ENCODE measurements at regions of chr19 and their contacts with region 1.

Region 1: GRCh38 chr19:16041299-16041990 is 34.9 kb upstream of the TPM4 start:
- DNase-seq: peak; percentile 75
- H3K4me3 Mint-ChIP-seq: no peak overlapping the region
- H3K27ac Mint-ChIP-seq: no peak overlapping the region
- H3K4me1 Mint-ChIP-seq: no peaks in the 10 kb centered on the region
- H3K27me3 Mint-ChIP-seq: no peaks in the 10 kb centered on the region
- CTCF ChIP-seq: peak; percentile 99

Region 2: GRCh38 chr19:15629003-15629880 is 412.2 kb before region 1 on chr19:
- CTCF ChIA-PET with region 1: interaction called, 8 read pairs
- POLR2A ChIA-PET with region 1: no interaction called
- intact Hi-C with region 1: loop called (anchors 2 kb)
- DNase-seq: peak; percentile 69
- H3K4me3 Mint-ChIP-seq: no peak overlapping the region
- H3K27ac Mint-ChIP-seq: no peak overlapping the region
- H3K4me1 Mint-ChIP-seq: no peaks in the 10 kb centered on the region
- H3K27me3 Mint-ChIP-seq: no peaks in the 10 kb centered on the region
- CTCF ChIP-seq: peak; percentile 95

Region 3: GRCh38 chr19:16062789-16063188 is 21.3 kb after region 1 on chr19:
- CTCF ChIA-PET with region 1: interaction called, 20 read pairs
- POLR2A ChIA-PET with region 1: interaction called, 5 read pairs
- intact Hi-C with region 1: no loop called
- DNase-seq: peak; percentile 57
- H3K4me3 Mint-ChIP-seq: no peak overlapping the region
- H3K27ac Mint-ChIP-seq: peak overlapping the region; percentile 57
- H3K4me1 Mint-ChIP-seq: peaks cover 12% of the 10 kb centered on the region
- H3K27me3 Mint-ChIP-seq: no peaks in the 10 kb centered on the region
- CTCF ChIP-seq: peak; percentile 87

Region 4: GRCh38 chr19:16070366-16070990 is 29.0 kb after region 1 on chr19:
- CTCF ChIA-PET with region 1: interaction called, 23 read pairs
- POLR2A ChIA-PET with region 1: interaction called, 7 read pairs
- intact Hi-C with region 1: no loop called
- DNase-seq: peak; percentile 85
- H3K4me3 Mint-ChIP-seq: no peak overlapping the region
- H3K27ac Mint-ChIP-seq: no peak overlapping the region
- H3K4me1 Mint-ChIP-seq: peaks cover 6% of the 10 kb centered on the region
- H3K27me3 Mint-ChIP-seq: no peaks in the 10 kb centered on the region
- CTCF ChIP-seq: no peak

Region 5: GRCh38 chr19:16076154-16076957 is 34.9 kb after region 1 on chr19 and contains the start of gene TPM4:
- CTCF ChIA-PET with region 1: interaction called, 23 read pairs
- POLR2A ChIA-PET with region 1: interaction called, 14 read pairs
- intact Hi-C with region 1: loop called (anchors 1 kb)
- DNase-seq: peak; percentile 94
- H3K4me3 Mint-ChIP-seq: peak within 1 kb of the TSS; percentile 71
- H3K27ac Mint-ChIP-seq: peak within 1 kb of the TSS; percentile 99
- H3K4me1 Mint-ChIP-seq: peaks cover 19% of the 10 kb centered on the region
- H3K27me3 Mint-ChIP-seq: no peaks in the 10 kb centered on the region
- CTCF ChIP-seq: no peak
- total RNA-seq, gene TPM4: 355 and 424 TPM in 2 replicates

Region 6: DNA sequence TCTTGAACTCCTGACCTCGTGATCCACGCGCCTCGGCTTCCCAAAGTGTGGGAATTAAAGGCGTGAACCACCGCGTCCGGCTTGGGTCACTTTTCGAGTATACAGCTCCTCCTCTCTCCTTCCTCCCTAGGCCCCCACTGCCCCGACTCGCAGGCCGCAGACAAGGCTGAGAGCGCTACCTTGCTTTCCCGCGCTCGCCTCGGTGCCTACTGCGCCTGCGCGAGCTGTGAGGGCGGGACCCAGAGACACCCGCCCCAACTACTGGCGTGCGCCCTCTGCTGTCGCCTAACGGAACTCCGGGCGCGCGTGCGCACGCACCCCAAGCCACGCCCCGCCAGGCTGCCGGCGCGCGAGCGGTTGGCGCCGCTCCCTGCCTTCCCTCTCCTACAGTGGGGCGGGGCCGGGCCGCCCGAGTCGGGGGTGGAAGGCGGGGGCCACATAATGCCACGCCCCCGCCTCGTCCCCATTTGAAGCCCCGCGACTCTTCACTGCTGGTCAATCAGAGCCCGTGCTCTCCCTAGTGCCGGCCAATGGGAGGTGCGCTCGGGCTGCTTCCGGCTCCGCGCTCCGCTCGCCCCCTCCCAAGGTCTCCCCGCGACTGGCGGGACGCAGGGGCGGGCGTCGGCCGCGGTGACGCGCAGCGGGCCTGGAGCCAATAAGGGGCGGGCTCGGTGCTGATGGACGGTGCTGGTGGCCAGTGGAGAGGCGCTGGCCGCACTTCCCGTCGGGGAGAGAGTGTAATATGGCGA is 69.9 kb after region 1 on chr19 and contains the start of gene RAB8A:
- CTCF ChIA-PET with region 1: interaction called, 34 read pairs
- POLR2A ChIA-PET with region 1: interaction called, 8 read pairs
- intact Hi-C with region 1: loop called (anchors 1 kb)
- DNase-seq: peak; percentile 99
- H3K4me3 Mint-ChIP-seq: peak within 1 kb of the TSS; percentile 90
- H3K27ac Mint-ChIP-seq: peak within 1 kb of the TSS; percentile 94
- H3K4me1 Mint-ChIP-seq: no peaks in the 10 kb centered on the region
- H3K27me3 Mint-ChIP-seq: no peaks in the 10 kb centered on the region
- CTCF ChIP-seq: peak; percentile 91
- total RNA-seq, gene RAB8A: 41.6 and 50.1 TPM in 2 replicates

Region 7: DNA sequence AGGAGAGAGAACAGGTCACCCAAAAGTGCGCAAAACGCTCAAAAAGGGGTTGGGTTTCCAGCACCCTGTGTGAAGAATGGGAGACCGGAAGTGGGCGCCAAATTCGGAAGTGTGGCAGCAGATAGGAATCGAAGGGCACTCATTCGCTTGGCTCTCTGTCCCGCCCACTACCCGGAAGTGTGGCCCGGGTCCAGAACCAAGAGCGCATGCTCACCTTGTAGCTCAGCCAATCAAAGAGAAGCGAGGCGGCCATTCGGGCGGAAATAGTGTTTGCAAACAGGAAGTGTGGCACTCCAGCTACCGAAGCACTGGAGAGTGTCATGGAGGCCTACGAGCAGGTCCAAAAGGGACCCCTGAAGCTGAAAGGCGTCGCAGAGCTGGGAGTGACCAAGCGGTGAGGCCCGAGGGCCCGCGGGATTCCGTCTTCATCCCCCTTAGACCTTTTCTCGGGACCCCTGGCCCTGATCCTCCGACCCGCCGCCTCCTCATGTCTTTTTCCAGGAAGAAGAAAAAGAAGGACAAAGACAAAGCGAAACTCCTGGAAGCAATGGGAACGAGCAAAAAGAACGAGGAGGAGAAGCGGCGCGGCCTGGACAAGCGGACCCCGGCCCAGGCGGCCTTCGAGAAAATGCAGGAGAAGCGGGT is 143.8 kb after region 1 on chr19 and contains the start of gene FAM32A:
- CTCF ChIA-PET with region 1: interaction called, 31 read pairs
- POLR2A ChIA-PET with region 1: interaction called, 16 read pairs
- intact Hi-C with region 1: loop called (anchors 1 kb)
- DNase-seq: peak; percentile 100
- H3K4me3 Mint-ChIP-seq: peak within 1 kb of the TSS; percentile 100
- H3K27ac Mint-ChIP-seq: peak within 1 kb of the TSS; percentile 100
- H3K4me1 Mint-ChIP-seq: peaks cover 22% of the 10 kb centered on the region
- H3K27me3 Mint-ChIP-seq: no peaks in the 10 kb centered on the region
- CTCF ChIP-seq: no peak
- total RNA-seq, gene FAM32A: 48.1 and 53.7 TPM in 2 replicates